CD8-positive, alpha-beta T cell (primary cell): ENCODE measurements at regions of chr22 and their contacts with region 1.

Region 1: GRCh38 chr22:31290494-31291471 is 1.5 kb downstream of the PIK3IP1 start:
- DNase-seq: peak; percentile 92 to 99 (median 95)
- ATAC-seq: peak; percentile 72
- H3K4me3 ChIP-seq: peak overlapping the region; percentile 97 to 99
- H3K4me3 Mint-ChIP-seq: peak overlapping the region; percentile 99
- H3K27ac ChIP-seq: peak overlapping the region; percentile 99
- H3K27ac Mint-ChIP-seq: peak overlapping the region; percentile 100
- H3K4me1 ChIP-seq: peaks cover 55% of the 10 kb centered on the region
- H3K4me1 Mint-ChIP-seq: peaks cover 65% of the 10 kb centered on the region
- H3K27me3 ChIP-seq: no peaks in the 10 kb centered on the region
- H3K27me3 Mint-ChIP-seq: no peaks in the 10 kb centered on the region
- CTCF ChIP-seq: no peak

Region 2: DNA sequence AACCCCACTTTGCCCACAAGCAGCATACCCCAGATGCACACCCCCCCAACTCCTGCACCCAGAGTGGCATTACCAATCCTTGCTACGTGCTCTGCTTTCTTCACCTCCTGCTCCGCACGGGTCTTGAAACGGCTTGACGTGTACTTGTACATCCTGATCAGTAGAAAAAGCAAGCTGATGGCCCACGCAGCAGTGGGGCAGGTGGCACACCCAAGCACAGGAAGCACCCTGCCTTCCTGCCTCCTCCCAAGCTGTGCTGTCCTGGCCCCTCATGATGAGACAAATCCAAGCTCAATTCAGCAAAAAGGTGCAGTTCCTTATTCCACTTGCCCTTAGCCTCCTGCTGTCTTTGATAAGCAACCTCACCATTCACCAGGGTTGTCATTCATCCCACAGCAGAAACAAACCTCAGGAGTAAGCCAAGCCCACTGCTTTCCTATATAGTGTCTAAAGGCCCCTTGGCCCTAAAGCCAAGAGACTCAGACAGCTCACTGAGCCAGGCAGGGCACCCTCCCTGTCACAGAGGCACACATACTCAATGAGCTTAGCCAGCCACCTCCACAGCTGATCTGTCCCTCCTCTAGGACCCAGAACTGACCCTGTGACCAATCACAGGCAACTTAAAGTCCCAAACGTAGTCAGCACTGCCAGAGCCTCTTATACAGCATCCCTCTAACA is 350.0 kb before region 1 on chr22:
- CTCF ChIA-PET with region 1: no interaction called
- POLR2A ChIA-PET with region 1: interaction called, 10 read pairs
- intact Hi-C with region 1: no loop called
- DNase-seq: peak in 8 of 9 experiments; percentile 35 to 79 (median 48)
- ATAC-seq: peak; percentile 74
- H3K4me3 ChIP-seq: peak overlapping the region; percentile 38
- H3K4me3 Mint-ChIP-seq: peak overlapping the region; percentile 77
- H3K27ac ChIP-seq: peak overlapping the region; percentile 60 to 78
- H3K27ac Mint-ChIP-seq: peak overlapping the region; percentile 90
- H3K4me1 ChIP-seq: peaks cover 74% of the 10 kb centered on the region
- H3K4me1 Mint-ChIP-seq: peaks cover 87% of the 10 kb centered on the region
- H3K27me3 ChIP-seq: no peaks in the 10 kb centered on the region
- H3K27me3 Mint-ChIP-seq: no peaks in the 10 kb centered on the region
- CTCF ChIP-seq: no peak

Region 3: GRCh38 chr22:31139866-31140716 is 150.7 kb before region 1 on chr22 and contains the start of gene PLA2G3:
- CTCF ChIA-PET with region 1: no interaction called
- POLR2A ChIA-PET with region 1: no interaction called
- intact Hi-C with region 1: no loop called
- DNase-seq: no peak
- ATAC-seq: no peak
- H3K4me3 ChIP-seq: no peak within 1 kb of the TSS
- H3K4me3 Mint-ChIP-seq: no peak within 1 kb of the TSS
- H3K27ac ChIP-seq: no peak within 1 kb of the TSS
- H3K27ac Mint-ChIP-seq: no peak within 1 kb of the TSS
- H3K4me1 ChIP-seq: no peaks in the 10 kb centered on the region
- H3K4me1 Mint-ChIP-seq: no peaks in the 10 kb centered on the region
- H3K27me3 ChIP-seq: no peaks in the 10 kb centered on the region
- H3K27me3 Mint-ChIP-seq: peaks cover 4% of the 10 kb centered on the region
- CTCF ChIP-seq: no peak
- total RNA-seq, gene PLA2G3: not detected

Region 4: GRCh38 chr22:31248138-31248745 is 42.5 kb before region 1 on chr22:
- CTCF ChIA-PET with region 1: interaction called, 3 read pairs
- POLR2A ChIA-PET with region 1: interaction called, 17 read pairs
- intact Hi-C with region 1: no loop called
- DNase-seq: peak; percentile 40 to 81 (median 72)
- ATAC-seq: peak; percentile 100
- H3K4me3 ChIP-seq: peak overlapping the region; percentile 21 to 33
- H3K4me3 Mint-ChIP-seq: peak overlapping the region; percentile 83
- H3K27ac ChIP-seq: no peak overlapping the region
- H3K27ac Mint-ChIP-seq: no peak overlapping the region
- H3K4me1 ChIP-seq: peaks cover 18% of the 10 kb centered on the region
- H3K4me1 Mint-ChIP-seq: peaks cover 26% of the 10 kb centered on the region
- H3K27me3 ChIP-seq: no peaks in the 10 kb centered on the region
- H3K27me3 Mint-ChIP-seq: no peaks in the 10 kb centered on the region
- CTCF ChIP-seq: no peak

Region 5: DNA sequence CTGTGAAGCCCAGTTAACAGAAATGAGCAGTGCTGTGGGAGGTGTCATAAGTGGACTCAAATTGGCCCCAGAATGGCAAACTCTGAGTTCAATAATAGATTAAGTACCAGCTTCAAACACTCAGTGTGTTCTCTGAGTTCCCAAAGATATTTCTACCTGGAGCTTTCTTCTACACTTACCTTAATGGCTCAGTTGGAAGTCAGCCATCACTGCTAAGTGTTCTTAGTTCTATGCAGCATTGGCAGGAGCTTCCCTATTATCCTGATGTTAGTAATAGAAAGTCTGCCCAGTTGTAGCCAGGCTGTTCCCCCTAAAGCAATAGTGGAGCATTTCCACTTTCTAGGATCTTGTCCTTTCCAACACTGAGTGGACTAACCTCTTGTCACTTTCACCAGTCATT is 11.2 kb after region 1 on chr22:
- CTCF ChIA-PET with region 1: interaction called, 15 read pairs
- POLR2A ChIA-PET with region 1: interaction called, 608 read pairs
- intact Hi-C with region 1: no loop called
- DNase-seq: no peak
- ATAC-seq: no peak
- H3K4me3 ChIP-seq: no peak overlapping the region
- H3K4me3 Mint-ChIP-seq: no peak overlapping the region
- H3K27ac ChIP-seq: no peak overlapping the region
- H3K27ac Mint-ChIP-seq: no peak overlapping the region
- H3K4me1 ChIP-seq: peaks cover 22% of the 10 kb centered on the region
- H3K4me1 Mint-ChIP-seq: peaks cover 43% of the 10 kb centered on the region
- H3K27me3 ChIP-seq: no peaks in the 10 kb centered on the region
- H3K27me3 Mint-ChIP-seq: no peaks in the 10 kb centered on the region
- CTCF ChIP-seq: no peak

Region 6: GRCh38 chr22:31399211-31400028 is 108.6 kb after region 1 on chr22 and contains the start of gene DRG1:
- CTCF ChIA-PET with region 1: no interaction called
- POLR2A ChIA-PET with region 1: interaction called, 6 read pairs
- intact Hi-C with region 1: loop called (anchors 1 to 5 kb)
- DNase-seq: peak; percentile 91 to 98 (median 97)
- ATAC-seq: peak; percentile 96
- H3K4me3 ChIP-seq: peak within 1 kb of the TSS; percentile 76 to 99
- H3K4me3 Mint-ChIP-seq: peak within 1 kb of the TSS; percentile 95
- H3K27ac ChIP-seq: peak within 1 kb of the TSS; percentile 82 to 87
- H3K27ac Mint-ChIP-seq: peak within 1 kb of the TSS; percentile 96
- H3K4me1 ChIP-seq: peaks cover 13% of the 10 kb centered on the region
- H3K4me1 Mint-ChIP-seq: peaks cover 31% of the 10 kb centered on the region
- H3K27me3 ChIP-seq: no peaks in the 10 kb centered on the region
- H3K27me3 Mint-ChIP-seq: no peaks in the 10 kb centered on the region
- CTCF ChIP-seq: no peak
- total RNA-seq, gene DRG1: 55.9 to 63.3 TPM

Region 7: GRCh38 chr22:31630331-31631329 is 339.8 kb after region 1 on chr22:
- CTCF ChIA-PET with region 1: no interaction called
- POLR2A ChIA-PET with region 1: interaction called, 5 read pairs
- intact Hi-C with region 1: loop called in 1 of 2 experiments (anchors 5 kb)
- DNase-seq: peak; percentile 69 to 94 (median 87)
- ATAC-seq: peak; percentile 92
- H3K4me3 ChIP-seq: peak overlapping the region; percentile 77 to 79
- H3K4me3 Mint-ChIP-seq: peak overlapping the region; percentile 90
- H3K27ac ChIP-seq: peak overlapping the region; percentile 85 to 98
- H3K27ac Mint-ChIP-seq: peak overlapping the region; percentile 94
- H3K4me1 ChIP-seq: peaks cover 40% of the 10 kb centered on the region
- H3K4me1 Mint-ChIP-seq: peaks cover 51% of the 10 kb centered on the region
- H3K27me3 ChIP-seq: no peaks in the 10 kb centered on the region
- H3K27me3 Mint-ChIP-seq: no peaks in the 10 kb centered on the region
- CTCF ChIP-seq: no peak